IMR-90 (cell line): ENCODE measurements at regions of chr17 and their contacts with region 1.

Region 1: GRCh38 chr17:35808962-35809854 is at the start of gene TAF15:
- DNase-seq: peak; percentile 99
- ATAC-seq: peak; percentile 93
- H3K4me3 ChIP-seq: peak within 1 kb of the TSS; percentile 83
- H3K27ac ChIP-seq: peak within 1 kb of the TSS; percentile 91
- H3K4me1 ChIP-seq: peaks cover 10% of the 10 kb centered on the region
- H3K27me3 ChIP-seq: no peaks in the 10 kb centered on the region
- CTCF ChIP-seq: peak; percentile 76
- POLR2A ChIP-seq: peak; percentile 99
- RAD21 ChIP-seq: peak; percentile 61
- total RNA-seq, gene TAF15: 46.8 and 47.2 TPM in 2 replicates

Region 2: GRCh38 chr17:35819456-35819855 is 10.2 kb after region 1 on chr17:
- CTCF ChIA-PET with region 1: interaction called, 11 read pairs
- POLR2A ChIA-PET with region 1: no interaction called
- dilution Hi-C with region 1: no loop called
- in situ Hi-C with region 1: no loop called
- intact Hi-C with region 1: no loop called
- DNase-seq: no peak
- ATAC-seq: no peak
- H3K4me3 ChIP-seq: no peak overlapping the region
- H3K27ac ChIP-seq: no peak overlapping the region
- H3K4me1 ChIP-seq: peaks cover 4% of the 10 kb centered on the region; the same call in 1 of the 2 replicates
- H3K27me3 ChIP-seq: no peaks in the 10 kb centered on the region
- CTCF ChIP-seq: 0 out of 2 replicates have a peak, but pooled peaks have one; percentile 2
- POLR2A ChIP-seq: no peak
- RAD21 ChIP-seq: no peak

Region 3: DNA sequence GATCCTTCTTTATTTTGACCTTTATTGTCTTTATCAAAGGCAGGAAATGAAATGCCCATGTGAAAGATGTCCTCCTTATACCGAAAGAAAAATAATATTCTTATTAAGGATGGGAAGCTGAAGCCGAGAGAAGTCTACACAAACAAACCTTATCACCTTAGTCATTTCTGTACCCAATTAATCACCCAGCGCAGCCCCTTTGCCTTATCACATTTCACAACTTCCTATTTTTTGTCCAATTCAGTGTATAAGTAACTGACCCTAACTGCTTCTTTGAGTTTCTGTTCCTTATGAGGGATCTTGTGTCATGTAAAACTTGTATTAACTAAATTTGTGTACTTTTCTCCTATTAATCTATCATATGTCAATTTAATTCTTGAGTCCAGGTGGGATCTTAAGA is 224.9 kb after region 1 on chr17:
- CTCF ChIA-PET with region 1: no interaction called
- POLR2A ChIA-PET with region 1: no interaction called
- dilution Hi-C with region 1: no loop called
- in situ Hi-C with region 1: no loop called
- intact Hi-C with region 1: no loop called
- DNase-seq: no peak
- ATAC-seq: no peak
- H3K4me3 ChIP-seq: no peak overlapping the region
- H3K27ac ChIP-seq: no peak overlapping the region
- H3K4me1 ChIP-seq: no peaks in the 10 kb centered on the region
- H3K27me3 ChIP-seq: no peaks in the 10 kb centered on the region
- CTCF ChIP-seq: no peak
- POLR2A ChIP-seq: no peak
- RAD21 ChIP-seq: no peak